Naive thymus-derived CD4-positive, alpha-beta T cell (primary cell): ENCODE measurements at regions of chr15 and their contacts with region 1.

Region 1: GRCh38 chr15:75639709-75640482 is at the start of gene IMP3:
- DNase-seq: peak; percentile 75 to 96 (median 93)
- ATAC-seq: peak; percentile 95
- H3K4me3 ChIP-seq: peak within 1 kb of the TSS; percentile 97
- H3K4me3 Mint-ChIP-seq: peak within 1 kb of the TSS; percentile 84 to 98 (median 95)
- H3K27ac ChIP-seq: peak within 1 kb of the TSS; percentile 85
- H3K27ac Mint-ChIP-seq: peak within 1 kb of the TSS; percentile 39 to 98 (median 96)
- H3K4me1 ChIP-seq: peaks cover 23 to 24% of the 10 kb centered on the region in 2 donors
- H3K4me1 Mint-ChIP-seq: peaks cover 33 to 49% (median 39%) of the 10 kb centered on the region in 7 donors
- H3K27me3 ChIP-seq: no peaks in the 10 kb centered on the region
- H3K27me3 Mint-ChIP-seq: no peaks in the 10 kb centered on the region
- total RNA-seq, gene IMP3: 32.3 to 100 (median 89.5) TPM

Region 2: GRCh38 chr15:75347222-75347878 is 292.5 kb before region 1 on chr15:
- CTCF ChIA-PET with region 1: interaction called, 3 read pairs
- POLR2A ChIA-PET with region 1: interaction called, 10 read pairs
- intact Hi-C with region 1: loop called in 1 of 2 experiments (anchors 1 kb)
- DNase-seq: peak; percentile 35 to 75 (median 69)
- ATAC-seq: peak; percentile 73
- H3K4me3 ChIP-seq: peak overlapping the region; percentile 59
- H3K4me3 Mint-ChIP-seq: peak overlapping the region; percentile 78 to 95 (median 90)
- H3K27ac ChIP-seq: peak overlapping the region; percentile 66
- H3K27ac Mint-ChIP-seq: peak overlapping the region; percentile 78 to 95 (median 89)
- H3K4me1 ChIP-seq: peaks cover 29 to 30% of the 10 kb centered on the region in 2 donors
- H3K4me1 Mint-ChIP-seq: peaks cover 21 to 45% (median 31%) of the 10 kb centered on the region in 7 donors
- H3K27me3 ChIP-seq: no peaks in the 10 kb centered on the region
- H3K27me3 Mint-ChIP-seq: peaks cover 0 to 26% (median 0%) of the 10 kb centered on the region in 5 donors

Region 3: GRCh38 chr15:75508840-75509532 is 130.9 kb before region 1 on chr15:
- CTCF ChIA-PET with region 1: interaction called, 31 read pairs
- POLR2A ChIA-PET with region 1: interaction called, 21 read pairs
- intact Hi-C with region 1: loop called in 1 of 2 experiments (anchors 1 kb)
- DNase-seq: peak in 7 of 9 donors; percentile 38 to 65 (median 55)
- ATAC-seq: peak; percentile 37
- H3K4me3 ChIP-seq: no peak overlapping the region
- H3K4me3 Mint-ChIP-seq: no peak overlapping the region
- H3K27ac ChIP-seq: no peak overlapping the region
- H3K27ac Mint-ChIP-seq: peak overlapping the region in 5 of 9 donors; percentile 2 to 31 (median 21)
- H3K4me1 ChIP-seq: no peaks in the 10 kb centered on the region
- H3K4me1 Mint-ChIP-seq: peaks cover 0 to 5% (median 4%) of the 10 kb centered on the region in 7 donors
- H3K27me3 ChIP-seq: no peaks in the 10 kb centered on the region
- H3K27me3 Mint-ChIP-seq: no peaks in the 10 kb centered on the region

Region 4: DNA sequence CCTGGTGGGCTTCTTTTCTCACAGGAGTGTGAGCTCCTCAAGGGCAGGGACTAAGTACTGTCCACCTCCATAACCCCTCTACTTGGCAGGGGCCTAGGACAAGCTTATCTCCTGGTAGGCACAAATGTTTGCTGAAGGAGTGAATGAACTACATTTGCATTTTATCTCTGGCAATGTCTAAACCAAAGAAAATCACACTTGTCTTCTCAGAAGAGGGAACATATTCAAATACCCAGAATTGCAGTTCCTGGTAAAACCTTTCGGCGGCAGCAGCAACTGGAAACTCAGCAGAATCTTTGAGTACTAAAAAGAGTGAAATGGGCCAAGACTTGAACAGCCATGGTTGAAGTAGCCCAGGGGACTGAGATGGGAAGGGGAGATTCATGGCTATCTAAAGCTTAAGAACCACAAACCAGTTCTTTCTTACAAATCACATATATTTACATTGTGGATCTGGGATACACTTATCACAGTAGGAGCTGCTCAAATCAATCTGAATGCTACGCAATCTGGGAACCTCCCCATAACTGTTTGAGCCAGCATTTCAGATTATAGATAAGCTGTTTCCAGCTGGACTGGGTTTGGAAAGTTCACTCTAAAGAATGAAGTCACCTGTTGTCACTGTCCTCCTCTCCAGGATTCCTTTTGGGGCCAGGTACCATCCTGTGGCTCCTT is 42.1 kb before region 1 on chr15:
- CTCF ChIA-PET with region 1: interaction called, 26 read pairs
- POLR2A ChIA-PET with region 1: interaction called, 4 read pairs
- intact Hi-C with region 1: loop called (anchors 1 kb)
- DNase-seq: peak in 7 of 9 donors; percentile 7 to 39 (median 26)
- ATAC-seq: no peak
- H3K4me3 ChIP-seq: no peak overlapping the region
- H3K4me3 Mint-ChIP-seq: peak overlapping the region in 3 of 10 donors; percentile 6 to 86 (median 14)
- H3K27ac ChIP-seq: peak overlapping the region; percentile 24
- H3K27ac Mint-ChIP-seq: peak overlapping the region in 7 of 9 donors; percentile 2 to 92 (median 54)
- H3K4me1 ChIP-seq: peaks cover 11 to 13% of the 10 kb centered on the region in 2 donors
- H3K4me1 Mint-ChIP-seq: peaks cover 16 to 40% (median 25%) of the 10 kb centered on the region in 7 donors
- H3K27me3 ChIP-seq: no peaks in the 10 kb centered on the region
- H3K27me3 Mint-ChIP-seq: no peaks in the 10 kb centered on the region

Region 5: DNA sequence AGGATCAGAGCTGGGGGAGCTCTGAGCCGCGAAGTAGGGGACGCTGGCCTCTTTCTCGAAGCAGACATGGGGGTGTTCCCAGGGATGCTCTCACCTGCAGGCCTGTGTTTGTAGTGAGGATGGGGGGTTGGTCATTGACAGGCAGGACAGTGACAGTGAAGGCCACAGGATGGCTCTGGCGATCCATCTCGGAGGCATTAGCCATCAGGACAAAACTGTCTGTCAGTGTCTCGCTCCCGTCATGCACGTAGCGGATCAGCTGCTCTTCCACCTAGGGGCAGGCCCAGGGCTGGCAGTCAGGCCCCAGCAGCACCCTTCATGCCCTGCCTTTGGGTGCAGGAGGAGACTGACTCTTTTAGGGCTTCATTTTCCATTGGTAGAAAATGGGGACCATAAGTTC is 44.7 kb after region 1 on chr15:
- CTCF ChIA-PET with region 1: interaction called, 3 read pairs
- POLR2A ChIA-PET with region 1: interaction called, 6 read pairs
- intact Hi-C with region 1: loop called in 1 of 2 experiments (anchors 2 kb)
- DNase-seq: no peak
- ATAC-seq: no peak
- H3K4me3 ChIP-seq: no peak overlapping the region
- H3K4me3 Mint-ChIP-seq: no peak overlapping the region
- H3K27ac ChIP-seq: no peak overlapping the region
- H3K27ac Mint-ChIP-seq: no peak overlapping the region
- H3K4me1 ChIP-seq: no peaks in the 10 kb centered on the region
- H3K4me1 Mint-ChIP-seq: peaks cover 0 to 4% (median 0%) of the 10 kb centered on the region in 7 donors
- H3K27me3 ChIP-seq: no peaks in the 10 kb centered on the region
- H3K27me3 Mint-ChIP-seq: no peaks in the 10 kb centered on the region